ENCODE measurements at regions of chr7 and their contacts with region 1.

Region 1: GRCh38 chr7:98841179-98841997 is 28.4 kb downstream of the TMEM130 start:
- DNase-seq: peak; percentile 62
- H3K4me3 ChIP-seq: no peak overlapping the region
- H3K27ac ChIP-seq: no peak overlapping the region
- H3K4me1 ChIP-seq: no peaks in the 10 kb centered on the region
- H3K27me3 ChIP-seq: no peaks in the 10 kb centered on the region
- CTCF ChIP-seq: peak; percentile 98

Region 2: GRCh38 chr7:98434095-98434494 is 407.3 kb before region 1 on chr7:
- intact Hi-C with region 1: loop called (anchors 2 kb)
- DNase-seq: no peak
- H3K4me3 ChIP-seq: no peak overlapping the region
- H3K27ac ChIP-seq: no peak overlapping the region
- H3K4me1 ChIP-seq: no peaks in the 10 kb centered on the region
- H3K27me3 ChIP-seq: no peaks in the 10 kb centered on the region
- CTCF ChIP-seq: no peak